HEK293 (cell line): ENCODE measurements at regions of chr12 and their contacts with region 1.

Region 1: DNA sequence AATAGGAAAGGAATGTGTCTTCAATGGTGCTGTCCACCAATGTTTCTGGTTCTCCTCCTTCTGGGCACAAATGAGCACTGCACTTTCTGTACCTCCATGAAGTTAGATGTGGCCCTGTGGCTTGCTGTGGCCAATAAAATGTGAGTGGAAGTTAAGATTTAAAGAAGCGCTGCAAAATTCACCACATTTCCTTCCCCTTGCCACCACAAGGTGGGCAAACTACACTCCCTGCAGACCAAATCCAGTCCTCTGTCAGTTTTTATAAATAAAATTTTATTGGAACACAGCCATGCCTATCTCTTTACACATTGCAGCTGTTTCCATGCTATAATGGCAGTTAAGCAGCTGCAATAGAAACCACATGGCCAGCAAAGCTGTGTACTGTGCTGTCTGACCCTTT is 141.4 kb upstream of the TMPO start:
- H3K4me3 ChIP-seq: no peak overlapping the region
- H3K27ac ChIP-seq: no peak overlapping the region
- H3K4me1 ChIP-seq: no peaks in the 10 kb centered on the region
- CTCF ChIP-seq: no peak

Region 2: GRCh38 chr12:98227162-98227561 is 146.8 kb before region 1 on chr12:
- CTCF ChIA-PET with region 1: interaction called, 13 read pairs
- POLR2A ChIA-PET with region 1: no interaction called
- H3K4me3 ChIP-seq: no peak overlapping the region
- H3K27ac ChIP-seq: no peak overlapping the region
- H3K4me1 ChIP-seq: no peaks in the 10 kb centered on the region
- CTCF ChIP-seq: no peak

Region 3: GRCh38 chr12:98397316-98398105 is 23.5 kb after region 1 on chr12:
- CTCF ChIA-PET with region 1: interaction called, 19 read pairs
- POLR2A ChIA-PET with region 1: no interaction called
- H3K4me3 ChIP-seq: peak overlapping the region; percentile 0
- H3K27ac ChIP-seq: no peak overlapping the region; the same call in 1 of the 2 replicates
- H3K4me1 ChIP-seq: peaks cover 7% of the 10 kb centered on the region
- CTCF ChIP-seq: peak; percentile 87